Gastrocnemius medialis (tissue), 4 donors: ENCODE measurements at regions of chr16 and their contacts with region 1.

Region 1: DNA sequence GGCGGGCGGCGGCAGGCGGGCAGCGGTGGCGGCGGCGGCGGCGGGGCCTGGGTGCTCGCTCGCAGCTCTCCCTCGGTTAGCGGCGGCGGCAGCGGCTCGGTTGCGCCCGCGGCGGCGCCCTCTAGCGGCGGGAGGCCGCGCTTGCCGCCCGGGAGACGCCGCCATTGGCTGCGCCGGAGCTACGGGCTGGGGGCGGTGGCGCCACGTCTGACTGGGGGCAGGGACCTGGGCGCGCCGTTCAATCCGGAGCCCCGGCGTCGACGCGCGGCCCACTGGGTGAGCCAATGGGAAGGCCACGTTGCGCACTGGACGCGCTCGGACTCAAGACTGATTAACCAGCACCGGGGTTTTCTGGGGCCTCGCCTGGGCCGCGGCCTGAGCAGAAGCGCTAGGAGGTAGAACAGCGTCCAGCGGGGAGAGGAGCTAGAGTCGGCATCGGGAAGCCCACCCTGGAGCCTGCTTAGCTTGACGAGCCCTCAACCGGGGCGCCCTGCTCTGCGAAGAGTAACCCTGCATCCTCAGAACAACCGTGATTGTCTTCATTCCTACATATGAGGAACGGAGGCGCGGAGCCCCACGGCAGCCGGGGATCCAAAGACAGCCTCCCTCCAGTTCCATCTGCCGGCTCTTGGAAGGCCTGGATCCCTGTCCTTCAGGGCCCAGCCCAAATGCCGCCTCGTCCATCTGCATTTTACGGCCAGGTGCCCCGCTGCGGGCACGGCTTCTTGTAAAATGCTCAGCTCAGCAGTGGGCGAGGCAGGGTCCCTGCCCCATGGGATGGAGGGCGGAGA is at the start of gene ZC3H7A:
- DNase-seq: peak; percentile 96 to 97
- ATAC-seq: peak; percentile 82 to 86
- H3K4me3 ChIP-seq: peak within 1 kb of the TSS; percentile 90 to 96 (median 94)
- H3K27ac ChIP-seq: peak within 1 kb of the TSS; percentile 98 to 100 (median 99)
- H3K4me1 ChIP-seq: peaks cover 52 to 59% of the 10 kb centered on the region in 2 donors
- H3K27me3 ChIP-seq: no peaks in the 10 kb centered on the region
- CTCF ChIP-seq: peak; percentile 62 to 100 (median 99)
- POLR2A ChIP-seq: peak; percentile 94 to 97
- total RNA-seq, gene ZC3H7A: 33.9 to 41.7 (median 37.9) TPM

Region 2: GRCh38 chr16:11396241-11397048 is 400.9 kb before region 1 on chr16:
- in situ Hi-C with region 1: loop called in 3 of 4 experiments (anchors 25 kb)
- intact Hi-C with region 1: no loop called
- DNase-seq: peak; percentile 50 to 77
- ATAC-seq: peak; percentile 67 to 74
- H3K4me3 ChIP-seq: no peak overlapping the region
- H3K27ac ChIP-seq: peak overlapping the region in 2 of 4 donors; percentile 10 to 75
- H3K4me1 ChIP-seq: peaks cover 3 to 4% of the 10 kb centered on the region in 2 donors
- H3K27me3 ChIP-seq: no peaks in the 10 kb centered on the region
- CTCF ChIP-seq: peak; percentile 97 to 99 (median 98)
- POLR2A ChIP-seq: no peak

Region 3: GRCh38 chr16:11546608-11547061 is 250.7 kb before region 1 on chr16:
- in situ Hi-C with region 1: loop called in 1 of 4 experiments (anchors 25 kb)
- intact Hi-C with region 1: no loop called
- DNase-seq: no peak
- ATAC-seq: peak; percentile 30 to 83
- H3K4me3 ChIP-seq: no peak overlapping the region
- H3K27ac ChIP-seq: peak overlapping the region in 3 of 4 donors; percentile 28 to 62 (median 40)
- H3K4me1 ChIP-seq: peaks cover 4 to 6% of the 10 kb centered on the region in 2 donors
- H3K27me3 ChIP-seq: no peaks in the 10 kb centered on the region
- CTCF ChIP-seq: no peak
- POLR2A ChIP-seq: no peak

Region 4: DNA sequence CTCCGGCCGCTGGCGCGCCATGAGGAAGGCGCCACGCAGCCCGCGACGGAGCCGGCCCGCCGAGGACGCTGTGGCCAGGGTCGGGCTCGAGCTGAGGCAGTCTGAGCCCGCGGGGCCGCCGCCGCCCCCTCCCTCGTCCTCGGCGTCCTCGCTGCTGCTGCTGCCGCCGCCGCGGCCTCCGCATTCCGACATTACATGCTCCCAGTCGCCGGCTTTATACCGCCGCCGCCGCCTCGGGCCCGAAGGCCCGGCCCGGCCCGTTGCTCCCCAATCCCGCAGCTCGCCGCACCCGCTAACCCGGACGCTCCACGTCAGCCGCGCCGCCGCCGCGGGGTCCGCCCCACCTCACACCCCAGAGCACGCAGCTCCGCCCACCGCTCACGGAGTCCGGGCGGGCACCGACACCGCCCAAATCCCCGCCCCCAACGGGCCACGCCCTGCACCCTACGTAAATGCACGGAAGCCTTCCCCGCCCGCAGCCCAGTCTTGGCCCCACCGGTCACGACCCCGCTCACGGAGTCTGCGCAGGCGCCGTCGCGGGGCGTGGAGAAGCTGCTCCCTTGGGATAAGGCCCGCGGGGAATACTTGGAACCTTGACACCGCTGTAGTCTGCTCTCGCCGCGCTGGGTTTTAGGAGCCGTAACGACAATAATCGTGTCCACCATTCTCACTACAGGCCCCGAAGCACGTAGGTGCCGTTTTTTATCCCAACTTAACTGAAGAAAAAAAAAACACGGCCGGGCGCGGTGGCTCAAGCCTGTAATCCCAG is 54.6 kb before region 1 on chr16 and contains the start of gene TXNDC11:
- in situ Hi-C with region 1: loop called in 3 of 4 experiments (anchors 10 kb)
- intact Hi-C with region 1: loop called (anchors 1 kb)
- DNase-seq: peak; percentile 99
- ATAC-seq: peak; percentile 81 to 82
- H3K4me3 ChIP-seq: peak within 1 kb of the TSS; percentile 77 to 99 (median 95)
- H3K27ac ChIP-seq: peak within 1 kb of the TSS; percentile 95 to 100 (median 99)
- H3K4me1 ChIP-seq: peaks cover 33 to 42% of the 10 kb centered on the region in 2 donors
- H3K27me3 ChIP-seq: no peaks in the 10 kb centered on the region
- CTCF ChIP-seq: no peak
- POLR2A ChIP-seq: peak; percentile 99 to 100
- total RNA-seq, gene TXNDC11: 35.2 to 64.5 (median 51.2) TPM

Region 5: DNA sequence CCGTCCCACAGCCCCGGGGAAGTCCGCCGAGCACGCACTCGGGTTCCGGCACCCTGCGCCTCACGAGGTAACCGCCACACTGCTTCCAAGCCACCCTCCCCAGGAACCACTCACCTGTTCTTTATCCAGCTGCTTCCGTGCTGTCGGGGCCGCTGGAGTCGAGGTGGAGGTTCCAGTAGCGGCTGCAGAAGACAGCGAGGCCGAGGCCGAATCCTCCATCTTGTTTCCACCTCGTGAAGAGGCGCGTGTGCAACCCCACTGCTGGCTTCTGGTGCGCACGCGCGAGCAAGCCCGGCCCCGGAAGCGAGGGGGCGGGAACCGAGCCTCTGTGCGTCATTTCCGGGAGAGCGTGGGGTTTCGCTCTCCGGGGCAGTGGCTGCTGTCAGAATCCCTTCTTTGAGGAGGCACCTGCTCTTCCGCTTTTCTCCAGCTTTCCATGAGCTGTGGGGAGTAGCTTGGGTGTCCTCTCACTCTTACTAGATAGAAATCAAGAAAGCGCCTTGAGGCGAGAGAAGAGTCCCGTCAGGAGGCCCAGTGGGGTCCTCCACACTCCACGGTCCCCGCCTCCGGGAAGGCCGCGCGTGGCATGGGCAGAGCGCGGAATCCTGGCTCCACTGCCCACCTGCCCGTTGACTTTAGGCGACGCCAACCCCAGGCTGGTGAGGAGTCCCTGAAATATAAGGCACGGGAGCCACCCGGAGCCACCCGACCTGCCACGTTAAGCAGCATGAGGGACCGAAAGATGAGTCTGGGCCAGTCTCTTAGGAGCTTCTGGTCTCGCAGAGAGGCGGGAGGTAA is 54.1 kb after region 1 on chr16 and contains the start of gene RSL1D1:
- in situ Hi-C with region 1: loop called in 1 of 4 experiments (anchors 5 kb)
- intact Hi-C with region 1: loop called (anchors 2 kb)
- DNase-seq: peak; percentile 85 to 91
- ATAC-seq: peak; percentile 96
- H3K4me3 ChIP-seq: peak within 1 kb of the TSS; percentile 87 to 98 (median 92)
- H3K27ac ChIP-seq: peak within 1 kb of the TSS; percentile 95 to 98 (median 96)
- H3K4me1 ChIP-seq: peaks cover 35 to 39% of the 10 kb centered on the region in 2 donors
- H3K27me3 ChIP-seq: no peaks in the 10 kb centered on the region
- CTCF ChIP-seq: peak in 2 of 5 experiments; percentile 7 to 30
- POLR2A ChIP-seq: peak; percentile 98 to 99
- total RNA-seq, gene RSL1D1: 215 to 302 (median 259) TPM

Region 6: GRCh38 chr16:11892761-11893160 is 95.4 kb after region 1 on chr16:
- in situ Hi-C with region 1: no loop called
- intact Hi-C with region 1: no loop called
- DNase-seq: no peak
- ATAC-seq: no peak
- H3K4me3 ChIP-seq: no peak overlapping the region
- H3K27ac ChIP-seq: no peak overlapping the region
- H3K4me1 ChIP-seq: no peaks in the 10 kb centered on the region
- H3K27me3 ChIP-seq: no peaks in the 10 kb centered on the region
- CTCF ChIP-seq: no peak
- POLR2A ChIP-seq: no peak

Region 7: GRCh38 chr16:11977376-11978041 is 180.1 kb after region 1 on chr16:
- in situ Hi-C with region 1: no loop called
- intact Hi-C with region 1: loop called (anchors 5 kb)
- DNase-seq: peak in 1 of 2 donors; percentile 43
- ATAC-seq: peak; percentile 54 to 59
- H3K4me3 ChIP-seq: peak overlapping the region; percentile 85 to 91 (median 88)
- H3K27ac ChIP-seq: peak overlapping the region; percentile 85 to 91 (median 89)
- H3K4me1 ChIP-seq: peaks cover 17 to 24% of the 10 kb centered on the region in 2 donors
- H3K27me3 ChIP-seq: no peaks in the 10 kb centered on the region
- CTCF ChIP-seq: no peak
- POLR2A ChIP-seq: peak; percentile 44 to 53